ENCODE measurements at regions of chr9 and their contacts with region 1.

Region 1: GRCh38 chr9:26773056-26773455 is 119.5 kb downstream of the CAAP1 start:
- DNase-seq: no peak

Region 2: DNA sequence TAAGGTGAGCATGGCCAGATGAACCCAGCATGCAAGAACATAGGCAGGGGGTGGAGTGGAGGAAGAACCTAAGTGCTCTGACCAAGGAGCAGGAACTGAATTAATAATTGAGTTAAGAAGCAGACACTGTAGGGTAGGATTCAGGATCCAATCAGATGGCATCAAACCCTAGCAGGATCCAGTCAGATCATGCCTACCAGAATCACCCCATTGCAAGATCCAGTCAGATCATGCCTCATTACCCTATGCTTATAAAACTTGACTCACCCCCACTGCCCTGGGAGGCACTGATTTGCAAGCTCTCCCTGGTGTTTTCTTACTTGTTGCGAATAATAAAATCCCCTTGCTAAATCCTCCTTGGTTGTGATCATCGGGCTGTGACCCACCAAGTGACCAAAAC is 1114.5 kb before region 1 on chr9:
- intact Hi-C with region 1: loop called in 1 of 2 experiments (anchors 5 kb)
- DNase-seq: no peak

Region 3: DNA sequence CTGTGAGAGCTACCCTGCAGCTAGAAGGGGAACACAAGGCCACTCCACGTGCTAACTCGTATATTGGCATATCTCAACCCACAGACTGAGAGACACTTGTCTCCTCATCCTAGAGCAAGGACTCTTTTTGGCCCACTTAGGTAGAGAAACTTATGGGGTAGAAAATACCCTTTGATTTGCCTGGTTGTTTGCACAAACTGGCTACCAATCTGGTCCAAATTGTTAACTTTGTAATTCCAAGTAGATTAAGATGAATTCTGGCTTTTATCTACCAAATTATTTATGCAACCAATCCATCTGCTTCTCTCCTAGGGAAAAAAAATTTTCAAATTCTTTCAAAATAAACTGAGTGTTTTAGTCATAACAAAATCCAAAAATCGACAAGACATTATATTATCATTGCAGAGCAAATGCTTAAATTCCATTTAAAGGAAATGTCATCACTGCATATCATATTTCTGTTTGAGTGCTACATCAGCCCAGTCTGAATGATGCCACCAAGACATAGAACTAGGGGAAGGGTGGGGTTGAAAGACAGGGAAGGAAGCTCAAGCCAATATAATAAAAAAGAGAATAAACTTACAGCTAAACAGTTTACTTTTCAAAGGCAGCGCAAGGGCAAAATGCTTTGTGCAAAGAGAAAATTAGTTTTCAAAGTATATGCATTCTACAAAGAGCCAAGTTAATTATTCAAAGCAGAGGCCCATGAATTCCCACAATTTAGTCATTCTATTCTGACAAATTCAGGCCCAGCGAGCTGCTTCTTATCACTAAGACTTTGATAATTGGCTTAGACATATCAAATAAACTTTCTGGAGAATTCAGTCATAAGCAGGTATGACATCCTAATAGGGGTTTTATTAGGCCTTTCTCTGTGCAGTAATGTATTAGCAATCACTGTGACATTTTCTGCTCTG is 78.4 kb before region 1 on chr9:
- intact Hi-C with region 1: no loop called
- DNase-seq: no peak